ENCODE measurements at regions of chr4 and their contacts with region 1.

Region 1: DNA sequence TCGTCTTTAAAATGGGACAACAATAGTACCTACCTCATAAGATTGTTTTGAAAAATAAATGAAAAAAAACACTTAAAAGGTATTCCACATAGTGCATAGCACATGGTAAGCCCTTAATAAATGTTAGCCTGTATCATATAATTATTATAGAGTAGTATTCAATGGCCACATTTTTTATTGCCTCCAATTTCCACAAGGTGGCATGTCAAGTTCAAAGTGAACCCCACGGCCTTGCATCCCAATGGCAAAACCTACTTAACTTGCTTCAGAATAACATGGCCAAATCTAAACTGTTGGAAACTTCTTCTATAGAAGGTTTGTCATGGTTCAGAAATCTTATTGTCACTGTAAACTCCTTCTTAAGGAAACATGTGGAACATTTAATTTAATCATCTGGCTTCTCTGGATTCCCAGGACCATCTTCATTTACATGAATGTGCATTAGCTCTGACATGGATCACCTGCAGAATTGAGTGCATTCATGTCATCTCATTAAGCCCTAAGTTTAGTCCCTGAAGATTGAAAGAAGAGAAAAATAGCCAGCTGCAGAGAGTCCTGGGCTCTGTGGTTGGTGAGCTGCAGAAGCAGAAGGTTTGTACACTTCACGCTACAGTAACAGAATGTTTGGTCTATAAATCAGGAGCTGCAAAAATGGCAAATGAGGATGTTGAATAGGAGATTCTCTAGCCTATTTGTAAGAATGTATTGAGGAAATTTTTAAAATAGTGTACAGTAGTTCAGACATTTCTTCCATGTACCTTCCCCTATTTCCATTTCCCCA is 61.0 kb downstream of the ANXA3 start:
- DNase-seq: peak; percentile 72
- ATAC-seq: peak; percentile 40
- H3K4me3 ChIP-seq: peak overlapping the region in 1 of 5 experiments; percentile 36
- H3K4me3 Mint-ChIP-seq: peak overlapping the region; percentile 49
- H3K27ac ChIP-seq: peak overlapping the region; percentile 11 to 81
- H3K27ac Mint-ChIP-seq: peak overlapping the region; percentile 86
- H3K4me1 ChIP-seq: peaks cover 55% of the 10 kb centered on the region in 2 donors
- H3K4me1 Mint-ChIP-seq: peaks cover 60% of the 10 kb centered on the region
- H3K27me3 ChIP-seq: no peaks in the 10 kb centered on the region
- H3K27me3 Mint-ChIP-seq: no peaks in the 10 kb centered on the region
- CTCF ChIP-seq: peak; percentile 77

Region 2: DNA sequence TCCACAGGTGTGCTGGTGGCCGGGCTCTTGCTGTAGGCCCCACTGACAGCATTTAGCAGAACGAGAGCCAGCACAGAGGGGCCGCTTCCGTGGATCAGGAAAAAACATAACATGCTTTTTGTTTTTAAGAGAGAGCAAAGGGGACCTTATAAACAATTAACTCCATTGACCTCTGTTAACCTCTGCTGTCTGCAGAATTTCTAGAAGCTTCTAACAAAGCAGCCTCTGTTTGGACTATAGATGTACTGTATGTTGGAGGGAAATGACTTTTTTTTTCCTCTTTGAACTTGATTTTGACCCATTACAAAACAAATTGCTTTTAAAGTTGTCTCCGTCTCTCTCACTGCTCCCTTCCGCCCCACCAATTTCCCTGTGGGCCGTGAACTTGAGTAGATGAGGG is 344.8 kb before region 1 on chr4:
- CTCF ChIA-PET with region 1: no interaction called
- POLR2A ChIA-PET with region 1: no interaction called
- intact Hi-C with region 1: no loop called
- DNase-seq: no peak
- ATAC-seq: no peak
- H3K4me3 ChIP-seq: no peak overlapping the region
- H3K4me3 Mint-ChIP-seq: no peak overlapping the region
- H3K27ac ChIP-seq: no peak overlapping the region
- H3K27ac Mint-ChIP-seq: no peak overlapping the region
- H3K4me1 ChIP-seq: no peaks in the 10 kb centered on the region
- H3K4me1 Mint-ChIP-seq: no peaks in the 10 kb centered on the region
- H3K27me3 ChIP-seq: peaks cover 0 to 2% (median 0%) of the 10 kb centered on the region in 4 experiments
- H3K27me3 Mint-ChIP-seq: peaks cover 23% of the 10 kb centered on the region
- CTCF ChIP-seq: no peak

Region 3: DNA sequence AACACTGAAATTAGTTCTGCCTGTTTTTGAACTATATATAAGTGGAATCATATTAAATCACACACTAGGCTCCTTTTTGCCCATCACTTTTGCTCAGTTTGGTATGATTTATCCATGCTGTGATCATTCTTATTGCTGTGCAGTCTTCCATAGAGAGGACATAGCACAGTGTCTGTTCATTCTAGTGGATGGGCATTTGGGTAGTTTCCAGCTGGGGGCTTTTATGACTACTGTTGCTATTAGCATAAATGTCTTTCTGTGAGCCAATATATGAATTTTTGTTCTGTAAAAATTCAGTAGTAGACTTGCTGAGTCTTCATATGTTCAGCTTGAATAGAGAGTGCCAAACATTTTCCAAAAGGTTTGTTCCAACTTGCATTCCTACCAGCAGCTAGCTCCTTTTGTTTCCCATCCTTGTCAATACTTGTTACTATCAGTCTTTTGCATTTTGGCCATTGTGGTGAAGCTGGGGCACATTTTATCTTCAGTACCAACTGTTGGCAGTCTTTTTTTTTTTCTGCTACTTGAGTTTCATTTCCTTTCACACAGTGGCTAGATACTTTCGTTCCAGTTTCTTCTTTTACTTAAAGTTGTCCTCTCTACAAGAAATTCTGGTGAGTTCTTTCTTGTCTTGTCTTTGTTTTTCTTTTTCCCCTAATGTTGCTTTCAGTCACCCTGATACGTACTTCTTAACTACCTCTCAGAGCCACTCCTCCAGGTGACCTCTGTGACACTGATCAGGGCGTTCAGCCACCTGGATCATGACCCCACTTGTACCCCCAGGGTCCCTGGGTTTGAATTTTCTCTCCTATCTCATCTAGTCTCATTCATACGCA is 26.0 kb after region 1 on chr4:
- CTCF ChIA-PET with region 1: interaction called, 84 read pairs
- POLR2A ChIA-PET with region 1: no interaction called
- intact Hi-C with region 1: loop called (anchors 1 kb)
- DNase-seq: peak; percentile 73
- ATAC-seq: peak; percentile 73
- H3K4me3 ChIP-seq: peak overlapping the region in 3 of 5 experiments; percentile 9 to 48 (median 35)
- H3K4me3 Mint-ChIP-seq: peak overlapping the region; percentile 78
- H3K27ac ChIP-seq: peak overlapping the region; percentile 87 to 94
- H3K27ac Mint-ChIP-seq: peak overlapping the region; percentile 98
- H3K4me1 ChIP-seq: peaks cover 62 to 69% of the 10 kb centered on the region in 2 donors
- H3K4me1 Mint-ChIP-seq: peaks cover 71% of the 10 kb centered on the region
- H3K27me3 ChIP-seq: no peaks in the 10 kb centered on the region
- H3K27me3 Mint-ChIP-seq: no peaks in the 10 kb centered on the region
- CTCF ChIP-seq: no peak

Region 4: DNA sequence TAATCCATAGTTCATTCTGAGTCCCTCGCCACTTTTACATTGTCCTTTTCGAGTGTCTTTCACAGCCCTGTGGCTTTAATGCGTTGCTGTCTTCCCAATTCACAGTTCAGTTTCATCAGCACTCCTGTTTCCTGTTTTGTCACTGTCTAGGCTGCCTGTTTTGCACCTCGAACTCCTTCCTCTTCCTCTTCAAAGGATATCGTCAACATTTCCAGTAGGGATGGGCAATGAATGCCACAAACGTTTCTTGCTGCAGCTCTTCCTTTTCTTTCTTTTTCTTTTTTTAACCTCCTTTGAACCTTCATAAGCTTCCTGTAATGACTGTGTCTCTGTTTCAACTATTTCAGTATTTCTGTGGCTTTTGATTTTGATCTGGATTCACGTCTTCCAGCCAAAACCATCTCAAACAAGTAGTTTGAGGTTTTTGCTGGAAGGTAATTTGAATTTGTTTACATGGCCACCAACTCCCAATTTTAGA is 44.4 kb after region 1 on chr4:
- CTCF ChIA-PET with region 1: interaction called, 12 read pairs
- POLR2A ChIA-PET with region 1: interaction called, 6 read pairs
- intact Hi-C with region 1: loop called (anchors 5 kb)
- DNase-seq: no peak
- ATAC-seq: no peak
- H3K4me3 ChIP-seq: peak overlapping the region in 4 of 5 experiments; percentile 8 to 52 (median 29)
- H3K4me3 Mint-ChIP-seq: peak overlapping the region; percentile 72
- H3K27ac ChIP-seq: peak overlapping the region; percentile 47 to 76
- H3K27ac Mint-ChIP-seq: peak overlapping the region; percentile 67
- H3K4me1 ChIP-seq: peaks cover 38 to 43% of the 10 kb centered on the region in 2 donors
- H3K4me1 Mint-ChIP-seq: peaks cover 45% of the 10 kb centered on the region
- H3K27me3 ChIP-seq: no peaks in the 10 kb centered on the region
- H3K27me3 Mint-ChIP-seq: no peaks in the 10 kb centered on the region
- CTCF ChIP-seq: no peak

Region 5: GRCh38 chr4:78661921-78662521 is 49.4 kb after region 1 on chr4:
- CTCF ChIA-PET with region 1: interaction called, 12 read pairs
- POLR2A ChIA-PET with region 1: interaction called, 6 read pairs
- intact Hi-C with region 1: loop called (anchors 5 kb)
- DNase-seq: peak; percentile 34
- ATAC-seq: peak; percentile 63
- H3K4me3 ChIP-seq: peak overlapping the region in 3 of 5 experiments; percentile 5 to 35 (median 12)
- H3K4me3 Mint-ChIP-seq: peak overlapping the region; percentile 75
- H3K27ac ChIP-seq: peak overlapping the region; percentile 16 to 67
- H3K27ac Mint-ChIP-seq: peak overlapping the region; percentile 89
- H3K4me1 ChIP-seq: peaks cover 56 to 61% of the 10 kb centered on the region in 2 donors
- H3K4me1 Mint-ChIP-seq: peaks cover 76% of the 10 kb centered on the region
- H3K27me3 ChIP-seq: no peaks in the 10 kb centered on the region
- H3K27me3 Mint-ChIP-seq: no peaks in the 10 kb centered on the region
- CTCF ChIP-seq: no peak

Region 6: GRCh38 chr4:78704981-78705683 is 92.5 kb after region 1 on chr4:
- CTCF ChIA-PET with region 1: interaction called, 13 read pairs
- POLR2A ChIA-PET with region 1: no interaction called
- intact Hi-C with region 1: no loop called
- DNase-seq: no peak
- ATAC-seq: no peak
- H3K4me3 ChIP-seq: no peak overlapping the region
- H3K4me3 Mint-ChIP-seq: no peak overlapping the region
- H3K27ac ChIP-seq: peak overlapping the region in 1 of 2 donors; percentile 21
- H3K27ac Mint-ChIP-seq: peak overlapping the region; percentile 72
- H3K4me1 ChIP-seq: peaks cover 22 to 34% of the 10 kb centered on the region in 2 donors
- H3K4me1 Mint-ChIP-seq: peaks cover 46% of the 10 kb centered on the region
- H3K27me3 ChIP-seq: no peaks in the 10 kb centered on the region
- H3K27me3 Mint-ChIP-seq: no peaks in the 10 kb centered on the region
- CTCF ChIP-seq: no peak

Region 7: GRCh38 chr4:78749972-78750727 is 137.6 kb after region 1 on chr4:
- CTCF ChIA-PET with region 1: interaction called, 4 read pairs
- POLR2A ChIA-PET with region 1: no interaction called
- intact Hi-C with region 1: loop called (anchors 1 kb)
- DNase-seq: peak; percentile 85
- ATAC-seq: peak; percentile 82
- H3K4me3 ChIP-seq: peak overlapping the region in 1 of 5 experiments; percentile 48
- H3K4me3 Mint-ChIP-seq: peak overlapping the region; percentile 59
- H3K27ac ChIP-seq: peak overlapping the region; percentile 86 to 87
- H3K27ac Mint-ChIP-seq: peak overlapping the region; percentile 92
- H3K4me1 ChIP-seq: peaks cover 51 to 54% of the 10 kb centered on the region in 2 donors
- H3K4me1 Mint-ChIP-seq: peaks cover 63% of the 10 kb centered on the region
- H3K27me3 ChIP-seq: no peaks in the 10 kb centered on the region
- H3K27me3 Mint-ChIP-seq: no peaks in the 10 kb centered on the region
- CTCF ChIP-seq: no peak

Region 8: GRCh38 chr4:78766650-78767049 is 154.1 kb after region 1 on chr4:
- CTCF ChIA-PET with region 1: interaction called, 12 read pairs
- POLR2A ChIA-PET with region 1: interaction called, 3 read pairs
- intact Hi-C with region 1: no loop called
- DNase-seq: peak; percentile 69
- ATAC-seq: peak; percentile 91
- H3K4me3 ChIP-seq: peak overlapping the region in 1 of 5 experiments; percentile 49
- H3K4me3 Mint-ChIP-seq: peak overlapping the region; percentile 77
- H3K27ac ChIP-seq: peak overlapping the region; percentile 26 to 70
- H3K27ac Mint-ChIP-seq: peak overlapping the region; percentile 80
- H3K4me1 ChIP-seq: peaks cover 22 to 26% of the 10 kb centered on the region in 2 donors
- H3K4me1 Mint-ChIP-seq: peaks cover 29% of the 10 kb centered on the region
- H3K27me3 ChIP-seq: no peaks in the 10 kb centered on the region
- H3K27me3 Mint-ChIP-seq: no peaks in the 10 kb centered on the region
- CTCF ChIP-seq: no peak

Measured in B cell (primary cell).